Activated CD4-positive, alpha-beta T cell treated with anti-CD3 and anti-CD28 coated beads for 36 hours (primary cell): ENCODE measurements at regions of chr16 and their contacts with region 1.

Region 1: DNA sequence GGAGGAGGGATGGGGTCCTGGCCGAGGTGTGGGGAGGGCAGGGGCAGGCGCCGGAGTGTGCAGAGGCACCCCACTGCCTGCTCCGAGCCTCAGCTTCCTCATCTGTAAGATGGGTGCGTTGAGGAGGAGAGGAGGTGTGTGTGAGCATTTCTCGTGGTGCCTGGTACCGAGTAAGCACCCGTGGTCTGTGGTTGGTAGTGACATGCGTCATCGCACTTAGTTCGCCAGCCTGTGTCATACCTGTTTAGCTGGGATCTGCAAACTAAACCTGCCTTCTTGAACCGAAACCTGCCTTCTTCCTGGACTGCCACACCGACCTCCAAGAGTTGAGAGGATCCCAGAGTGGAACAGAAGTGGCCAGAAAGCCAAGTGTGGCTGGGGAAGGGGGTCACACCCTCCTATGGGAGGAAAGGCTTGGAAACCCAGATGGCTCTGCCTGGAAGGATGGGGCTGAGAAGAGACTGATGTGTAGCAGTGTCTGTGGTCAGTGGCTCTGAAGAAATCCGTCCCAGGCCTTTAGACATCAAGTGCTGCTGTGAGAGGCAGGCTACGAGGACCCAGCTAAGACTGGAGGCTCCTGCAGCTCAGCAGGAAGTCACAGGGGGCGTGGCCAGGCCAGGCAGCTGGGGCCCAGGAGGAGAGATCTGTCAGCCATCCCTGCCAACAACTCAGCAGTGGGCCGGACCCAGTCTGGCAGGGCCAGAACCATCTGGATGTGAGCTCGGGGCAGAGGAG is 162.6 kb upstream of the PLCG2 start:
- DNase-seq: peak; percentile 88
- ATAC-seq: peak; percentile 98
- H3K4me3 Mint-ChIP-seq: peak overlapping the region; percentile 28
- H3K27ac Mint-ChIP-seq: peak overlapping the region; percentile 92
- H3K4me1 Mint-ChIP-seq: peaks cover 3% of the 10 kb centered on the region
- H3K27me3 Mint-ChIP-seq: no peaks in the 10 kb centered on the region

Region 2: GRCh38 chr16:81558444-81559175 is 57.9 kb before region 1 on chr16:
- CTCF ChIA-PET with region 1: interaction called, 3 read pairs
- POLR2A ChIA-PET with region 1: interaction called, 12 read pairs
- intact Hi-C with region 1: no loop called
- DNase-seq: no peak
- ATAC-seq: no peak
- H3K4me3 Mint-ChIP-seq: no peak overlapping the region
- H3K27ac Mint-ChIP-seq: no peak overlapping the region
- H3K4me1 Mint-ChIP-seq: peaks cover 17% of the 10 kb centered on the region
- H3K27me3 Mint-ChIP-seq: no peaks in the 10 kb centered on the region

Region 3: DNA sequence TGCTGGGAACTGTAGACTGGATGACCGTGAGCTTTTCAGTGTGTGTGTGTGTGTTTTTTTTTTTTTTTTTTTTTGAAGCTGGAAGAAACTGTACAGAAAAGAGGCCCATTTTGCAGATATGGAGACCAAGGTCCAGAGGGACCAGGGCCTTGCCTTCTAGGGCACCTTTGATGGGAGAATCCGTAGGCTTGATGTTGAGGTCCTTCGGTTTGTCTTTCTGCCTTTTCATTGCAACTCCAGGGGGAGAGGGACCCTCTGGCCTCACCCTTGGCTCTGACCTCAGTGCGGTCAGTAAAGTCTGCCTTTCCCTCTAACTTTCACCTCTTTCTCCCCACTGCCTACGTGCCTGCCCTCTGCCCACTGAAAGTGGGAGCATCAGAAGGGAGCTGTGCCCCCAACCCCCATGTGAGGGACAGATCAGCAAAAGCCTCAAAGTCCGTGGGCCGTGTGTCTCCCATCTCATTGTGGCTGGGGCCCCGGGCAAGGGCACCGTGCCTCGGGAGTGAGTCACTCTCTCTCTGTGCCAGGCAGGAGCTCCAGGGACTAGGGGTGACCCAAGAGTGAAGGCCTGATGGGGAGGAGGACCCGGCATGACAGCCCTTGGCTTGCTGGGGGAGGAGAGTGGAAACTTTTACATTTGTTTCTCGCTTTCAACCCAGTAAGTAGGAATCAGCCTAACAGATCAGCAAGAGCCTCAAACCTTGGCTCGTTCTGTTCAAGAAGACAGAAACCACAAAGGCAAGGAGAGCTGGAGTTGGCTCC is 48.3 kb before region 1 on chr16:
- CTCF ChIA-PET with region 1: no interaction called
- POLR2A ChIA-PET with region 1: interaction called, 3 read pairs
- intact Hi-C with region 1: loop called in 1 of 2 experiments (anchors 1 kb)
- DNase-seq: peak; percentile 85
- ATAC-seq: peak; percentile 98
- H3K4me3 Mint-ChIP-seq: peak overlapping the region; percentile 20
- H3K27ac Mint-ChIP-seq: peak overlapping the region; percentile 92
- H3K4me1 Mint-ChIP-seq: peaks cover 34% of the 10 kb centered on the region
- H3K27me3 Mint-ChIP-seq: no peaks in the 10 kb centered on the region

Region 4: GRCh38 chr16:81595604-81596292 is 20.7 kb before region 1 on chr16:
- CTCF ChIA-PET with region 1: no interaction called
- POLR2A ChIA-PET with region 1: no interaction called
- intact Hi-C with region 1: loop called in 1 of 2 experiments (anchors 1 kb)
- DNase-seq: no peak
- ATAC-seq: peak; percentile 69
- H3K4me3 Mint-ChIP-seq: no peak overlapping the region
- H3K27ac Mint-ChIP-seq: peak overlapping the region; percentile 51
- H3K4me1 Mint-ChIP-seq: peaks cover 22% of the 10 kb centered on the region
- H3K27me3 Mint-ChIP-seq: no peaks in the 10 kb centered on the region

Region 5: DNA sequence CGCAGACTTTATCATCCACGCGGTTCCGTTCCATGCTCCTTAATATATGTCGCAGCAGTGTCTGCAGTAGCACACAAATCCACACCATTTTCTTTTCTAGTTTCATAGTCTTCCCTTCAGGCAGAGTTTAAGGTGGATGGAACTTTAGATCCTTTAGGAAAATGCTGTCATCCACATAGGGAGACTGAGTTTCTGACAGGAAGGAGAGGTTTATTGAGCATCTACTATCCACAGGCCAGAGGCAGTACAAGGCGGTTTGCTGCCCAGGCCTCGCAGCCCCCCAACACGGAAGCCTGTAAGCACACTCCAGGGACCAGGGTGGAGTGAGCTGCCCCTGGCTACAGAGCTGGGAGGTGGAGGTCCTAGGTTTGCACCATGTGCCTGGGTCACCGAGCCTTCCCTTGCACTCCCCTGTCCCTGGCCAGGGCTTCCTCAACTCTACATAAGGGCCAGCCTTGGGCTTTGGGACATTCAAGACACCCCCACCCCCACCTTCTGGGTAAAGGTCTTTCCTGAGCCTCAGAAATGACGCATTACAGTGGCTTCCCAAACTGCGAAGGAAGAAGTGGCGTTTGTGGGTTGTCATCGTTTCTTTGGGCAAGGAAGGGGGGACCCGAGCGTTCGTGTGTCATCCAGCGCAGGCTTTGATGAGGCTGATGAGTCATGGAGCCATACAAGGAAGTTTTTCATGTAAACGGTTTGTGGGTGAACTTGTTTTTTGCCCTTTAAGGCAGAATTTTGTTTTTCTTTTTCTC is 16.1 kb after region 1 on chr16:
- CTCF ChIA-PET with region 1: interaction called, 5 read pairs
- POLR2A ChIA-PET with region 1: no interaction called
- intact Hi-C with region 1: loop called in 1 of 2 experiments (anchors 1 kb)
- DNase-seq: peak; percentile 90
- ATAC-seq: peak; percentile 81
- H3K4me3 Mint-ChIP-seq: peak overlapping the region; percentile 47
- H3K27ac Mint-ChIP-seq: peak overlapping the region; percentile 97
- H3K4me1 Mint-ChIP-seq: peaks cover 67% of the 10 kb centered on the region
- H3K27me3 Mint-ChIP-seq: no peaks in the 10 kb centered on the region